WTC11 (cell line): ENCODE measurements at regions of chr12 and their contacts with region 1.

Region 1: GRCh38 chr12:48957141-48958048 is at the start of gene ARF3:
- DNase-seq: peak; percentile 98
- ATAC-seq: peak; percentile 89
- H3K4me3 Mint-ChIP-seq: peak within 1 kb of the TSS; percentile 95
- H3K27ac Mint-ChIP-seq: peak within 1 kb of the TSS; percentile 97
- H3K4me1 Mint-ChIP-seq: peaks cover 31% of the 10 kb centered on the region
- H3K27me3 Mint-ChIP-seq: peaks cover 7% of the 10 kb centered on the region; the same call in 1 of the 2 replicates
- CTCF ChIP-seq: no peak
- total RNA-seq, gene ARF3: 238 to 256 TPM (median 248 TPM) in 3 replicates

Region 2: DNA sequence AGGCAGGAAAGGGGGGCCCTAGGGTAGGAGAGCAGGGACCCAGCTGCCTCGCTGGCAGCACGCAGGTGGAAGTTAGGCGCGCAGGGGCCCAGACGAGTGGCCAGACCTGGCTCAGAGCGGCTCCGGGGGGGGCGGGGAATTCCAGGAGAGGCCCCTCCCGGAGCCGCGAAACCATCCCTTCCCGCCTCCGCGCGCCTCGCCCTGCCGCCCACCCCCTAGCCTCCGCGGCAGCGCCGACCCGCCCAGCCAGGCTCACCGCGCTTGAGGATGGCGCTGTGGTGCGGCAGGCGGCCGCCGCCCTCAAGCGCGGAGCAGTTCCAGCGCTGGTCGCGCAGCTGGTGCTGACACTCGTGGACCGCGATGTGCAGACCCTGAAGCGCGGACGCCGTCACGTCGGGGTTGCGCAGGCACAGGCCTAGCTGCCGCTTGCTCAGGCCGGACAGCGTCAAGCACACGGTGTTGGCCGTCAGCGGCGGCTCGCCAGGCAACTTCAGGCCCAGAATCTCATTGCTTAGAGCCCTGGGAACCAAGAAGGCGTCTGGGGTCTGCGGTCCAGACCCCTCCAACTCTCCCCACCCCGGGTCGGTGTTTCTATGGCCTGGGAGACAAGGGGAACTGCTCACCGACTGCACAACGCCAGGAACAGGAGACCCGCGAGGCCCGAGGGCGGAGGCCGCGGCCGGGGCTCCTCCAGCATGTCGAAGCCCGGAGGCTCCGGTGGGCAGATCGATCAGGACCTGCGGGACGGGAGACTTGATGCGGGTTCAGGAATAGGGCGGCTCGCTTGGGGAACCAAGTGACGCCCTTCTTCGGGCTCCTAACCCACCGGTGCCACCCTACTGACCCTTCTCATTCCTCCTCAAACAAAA is 12.7 kb after region 1 on chr12:
- CTCF ChIA-PET with region 1: interaction called, 38 read pairs
- POLR2A ChIA-PET with region 1: interaction called, 5 read pairs
- DNase-seq: peak; percentile 48
- ATAC-seq: peak; percentile 3; the same call in 1 of the 2 replicates
- H3K4me3 Mint-ChIP-seq: peak overlapping the region; percentile 86
- H3K27ac Mint-ChIP-seq: no peak overlapping the region
- H3K4me1 Mint-ChIP-seq: peaks cover 54% of the 10 kb centered on the region
- H3K27me3 Mint-ChIP-seq: peaks cover 89% of the 10 kb centered on the region
- CTCF ChIP-seq: no peak